Vagina (tissue), 2 donors: ENCODE measurements at regions of chr3 and their contacts with region 1.

Region 1: GRCh38 chr3:57692259-57693147 is at the start of gene DENND6A:
- DNase-seq: peak in 1 of 2 donors; percentile 96
- H3K4me3 ChIP-seq: peak within 1 kb of the TSS; percentile 99
- H3K27ac ChIP-seq: peak within 1 kb of the TSS; percentile 99
- H3K4me1 ChIP-seq: peaks cover 43% of the 10 kb centered on the region
- H3K27me3 ChIP-seq: no peaks in the 10 kb centered on the region
- CTCF ChIP-seq: peak in 1 of 3 experiments; percentile 24
- POLR2A ChIP-seq: peak in 1 of 2 donors; percentile 99
- total RNA-seq, gene DENND6A: 24.8 TPM

Region 2: DNA sequence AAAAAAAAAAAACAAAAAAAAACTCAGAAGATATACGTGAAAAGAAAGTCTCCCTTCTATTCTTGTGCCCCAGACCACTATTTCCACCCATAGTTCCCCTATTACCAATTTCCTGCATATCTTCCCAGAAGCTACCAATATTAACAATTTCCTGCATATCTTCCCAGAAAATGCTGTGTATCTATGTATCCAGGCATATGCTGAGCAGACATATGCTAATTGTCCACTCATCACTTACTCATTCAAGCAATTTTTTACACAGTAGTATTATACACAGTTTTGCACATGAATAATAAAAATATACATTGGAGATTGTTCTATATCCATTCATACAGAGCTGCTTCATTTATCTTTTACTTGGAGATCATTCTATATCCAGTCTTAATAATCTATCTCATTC is 51.0 kb after region 1 on chr3:
- intact Hi-C with region 1: no loop called
- DNase-seq: no peak
- H3K4me3 ChIP-seq: no peak overlapping the region
- H3K27ac ChIP-seq: no peak overlapping the region
- H3K4me1 ChIP-seq: no peaks in the 10 kb centered on the region
- H3K27me3 ChIP-seq: no peaks in the 10 kb centered on the region
- CTCF ChIP-seq: no peak
- POLR2A ChIP-seq: no peak

Region 3: GRCh38 chr3:57755668-57756527 is 63.4 kb after region 1 on chr3 and contains the start of gene SLMAP:
- intact Hi-C with region 1: loop called (anchors 1 kb)
- DNase-seq: peak; percentile 98
- H3K4me3 ChIP-seq: peak within 1 kb of the TSS; percentile 61 to 96
- H3K27ac ChIP-seq: peak within 1 kb of the TSS; percentile 92
- H3K4me1 ChIP-seq: peaks cover 48% of the 10 kb centered on the region
- H3K27me3 ChIP-seq: no peaks in the 10 kb centered on the region
- CTCF ChIP-seq: no peak
- POLR2A ChIP-seq: peak in 1 of 2 donors; percentile 51
- total RNA-seq, gene SLMAP: 102 TPM